ENCODE measurements at regions of chr11 and their contacts with region 1.

Region 1: DNA sequence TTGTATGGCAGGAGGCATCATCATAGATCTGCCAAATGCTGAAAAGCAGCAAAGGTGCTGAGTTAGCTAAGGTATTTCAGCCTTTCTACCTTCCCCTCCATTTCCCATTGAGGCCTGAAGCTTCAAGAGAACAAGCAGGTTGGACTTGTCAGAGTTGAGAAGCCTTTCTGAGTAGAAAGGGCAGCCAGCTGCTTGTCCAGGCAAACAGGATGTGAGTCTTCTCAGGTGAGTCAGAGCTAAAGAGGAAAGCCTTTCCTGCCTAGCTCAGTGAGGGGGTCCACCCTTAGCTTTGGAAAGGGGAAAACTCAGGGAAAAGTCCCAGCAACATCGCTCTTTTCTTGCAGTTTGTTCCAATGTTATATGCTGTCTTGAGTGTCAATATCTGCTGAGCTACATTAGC is 13.2 kb upstream of the MPZL2 start:
- DNase-seq: peak; percentile 43
- ATAC-seq: peak; percentile 55
- H3K4me3 Mint-ChIP-seq: no peak overlapping the region
- H3K27ac Mint-ChIP-seq: no peak overlapping the region
- H3K4me1 Mint-ChIP-seq: peaks cover 53% of the 10 kb centered on the region
- H3K27me3 Mint-ChIP-seq: no peaks in the 10 kb centered on the region

Region 2: DNA sequence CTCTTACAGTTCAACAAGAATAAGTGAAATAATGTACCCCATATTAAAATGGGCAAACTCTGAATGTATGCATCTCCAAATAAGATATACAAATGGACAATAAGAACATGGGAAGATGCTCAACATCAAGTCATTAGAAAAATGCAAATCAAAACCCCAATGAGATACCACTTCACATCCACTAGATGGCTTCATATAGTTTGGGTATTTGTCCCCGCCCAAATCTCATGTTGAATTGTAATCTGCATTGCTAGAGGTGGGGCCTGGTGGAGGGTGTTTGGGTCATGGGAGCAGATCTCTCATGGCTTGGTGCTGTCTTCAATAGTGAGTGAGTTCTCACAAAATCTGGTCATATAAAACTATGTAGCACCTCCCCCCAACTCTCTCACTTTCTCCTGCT is 18.9 kb before region 1 on chr11:
- CTCF ChIA-PET with region 1: interaction called, 42 read pairs
- POLR2A ChIA-PET with region 1: interaction called, 7 read pairs
- DNase-seq: peak; percentile 42
- ATAC-seq: no peak
- H3K4me3 Mint-ChIP-seq: no peak overlapping the region
- H3K27ac Mint-ChIP-seq: no peak overlapping the region
- H3K4me1 Mint-ChIP-seq: peaks cover 56% of the 10 kb centered on the region
- H3K27me3 Mint-ChIP-seq: no peaks in the 10 kb centered on the region

Region 3: GRCh38 chr11:118263695-118264567 is 13.4 kb before region 1 on chr11 and contains the start of gene MPZL2:
- CTCF ChIA-PET with region 1: interaction called, 42 read pairs
- POLR2A ChIA-PET with region 1: interaction called, 7 read pairs
- DNase-seq: peak; percentile 55
- ATAC-seq: peak; percentile 73
- H3K4me3 Mint-ChIP-seq: peak within 1 kb of the TSS; percentile 77
- H3K27ac Mint-ChIP-seq: peak within 1 kb of the TSS; percentile 23
- H3K4me1 Mint-ChIP-seq: peaks cover 65% of the 10 kb centered on the region
- H3K27me3 Mint-ChIP-seq: peaks cover 3% of the 10 kb centered on the region
- total RNA-seq, gene MPZL2: 11.7 to 12.2 TPM